Esophagus squamous epithelium (tissue), 5 donors: ENCODE measurements at regions of chr4 and their contacts with region 1.

Region 1: DNA sequence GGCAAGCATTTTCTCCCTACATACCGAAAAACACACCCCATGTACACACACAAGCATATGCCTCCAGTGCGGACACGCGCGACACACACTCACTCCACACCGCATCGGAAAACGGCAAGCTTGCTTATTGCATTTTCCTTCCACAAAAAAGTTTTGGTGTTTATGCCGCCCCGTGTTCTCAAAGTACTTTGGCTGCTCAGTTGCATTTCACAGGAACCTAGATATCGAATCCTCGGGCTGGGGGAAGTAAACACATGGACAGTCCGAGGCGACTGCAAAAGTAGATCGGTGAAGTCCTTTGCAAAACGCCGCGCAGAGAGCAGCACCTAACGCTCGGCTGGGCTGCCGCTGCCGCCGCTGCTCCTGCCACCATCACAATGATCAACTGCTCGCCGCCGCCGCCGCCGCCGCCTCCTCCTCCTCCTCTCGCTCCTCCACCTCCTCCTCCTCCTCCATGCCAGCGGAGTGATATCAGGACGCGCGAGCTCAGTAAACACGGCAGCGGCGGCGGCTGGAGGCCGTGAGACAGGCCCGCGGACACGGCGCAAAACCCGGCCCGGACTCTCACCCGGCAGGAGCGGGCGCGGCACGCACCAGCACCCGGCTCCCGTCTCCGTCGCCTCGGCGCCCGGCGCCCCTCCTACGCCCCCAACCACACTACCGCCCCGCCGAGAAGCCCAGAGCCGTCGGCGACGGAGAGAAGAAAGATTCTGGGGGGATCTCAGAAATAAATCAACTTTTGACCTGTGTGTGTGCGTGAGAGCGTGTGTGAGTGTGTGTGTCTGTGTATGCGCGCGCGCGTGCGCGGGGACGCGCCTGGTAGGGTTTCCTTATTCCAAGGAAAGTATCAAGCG is at the start of gene MAML3:
- DNase-seq: peak; percentile 31
- H3K4me3 ChIP-seq: peak within 1 kb of the TSS; percentile 58 to 85 (median 80)
- H3K27ac ChIP-seq: peak within 1 kb of the TSS; percentile 94 to 99 (median 96)
- H3K4me1 ChIP-seq: peaks cover 0 to 38% (median 7%) of the 10 kb centered on the region in 3 donors
- H3K27me3 ChIP-seq: no peaks in the 10 kb centered on the region
- CTCF ChIP-seq: peak in 3 of 6 experiments; percentile 2 to 25 (median 23)
- POLR2A ChIP-seq: peak in 3 of 4 donors; percentile 44 to 86 (median 83)
- total RNA-seq, gene MAML3: 6.9 to 14.2 (median 8.9) TPM

Region 2: DNA sequence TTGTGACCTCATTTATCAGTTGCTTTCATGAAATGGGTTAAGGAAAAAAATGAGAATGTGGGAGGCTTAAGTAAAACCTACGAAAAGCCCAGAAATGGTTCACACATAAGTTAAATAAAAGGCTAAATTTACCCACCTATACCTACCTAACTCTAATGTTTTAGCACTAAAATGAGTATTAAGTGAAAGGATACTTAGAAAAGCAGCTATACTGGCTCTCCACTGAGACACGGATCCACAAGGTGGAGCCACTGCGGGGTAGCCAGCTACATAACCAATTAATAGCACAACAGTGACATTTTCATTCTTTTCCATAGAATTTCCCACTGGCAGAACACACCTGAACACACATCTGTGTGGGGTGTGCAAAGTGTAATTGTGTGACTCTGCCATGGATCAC is 101.9 kb before region 1 on chr4:
- intact Hi-C with region 1: loop called (anchors 5 kb)
- DNase-seq: no peak
- H3K4me3 ChIP-seq: no peak overlapping the region
- H3K27ac ChIP-seq: no peak overlapping the region
- H3K4me1 ChIP-seq: peaks cover 0 to 34% (median 24%) of the 10 kb centered on the region in 3 donors
- H3K27me3 ChIP-seq: no peaks in the 10 kb centered on the region
- CTCF ChIP-seq: peak in 5 of 6 experiments; percentile 26 to 71 (median 50)
- POLR2A ChIP-seq: no peak

Region 3: GRCh38 chr4:140237606-140237986 is 83.7 kb after region 1 on chr4:
- intact Hi-C with region 1: loop called (anchors 5 kb)
- DNase-seq: peak; percentile 7
- H3K4me3 ChIP-seq: peak overlapping the region in 3 of 4 donors; percentile 14 to 52 (median 18)
- H3K27ac ChIP-seq: peak overlapping the region; percentile 83 to 91 (median 90)
- H3K4me1 ChIP-seq: peaks cover 20 to 72% (median 31%) of the 10 kb centered on the region in 3 donors
- H3K27me3 ChIP-seq: no peaks in the 10 kb centered on the region
- CTCF ChIP-seq: no peak
- POLR2A ChIP-seq: peak in 1 of 4 donors; percentile 9

Region 4: DNA sequence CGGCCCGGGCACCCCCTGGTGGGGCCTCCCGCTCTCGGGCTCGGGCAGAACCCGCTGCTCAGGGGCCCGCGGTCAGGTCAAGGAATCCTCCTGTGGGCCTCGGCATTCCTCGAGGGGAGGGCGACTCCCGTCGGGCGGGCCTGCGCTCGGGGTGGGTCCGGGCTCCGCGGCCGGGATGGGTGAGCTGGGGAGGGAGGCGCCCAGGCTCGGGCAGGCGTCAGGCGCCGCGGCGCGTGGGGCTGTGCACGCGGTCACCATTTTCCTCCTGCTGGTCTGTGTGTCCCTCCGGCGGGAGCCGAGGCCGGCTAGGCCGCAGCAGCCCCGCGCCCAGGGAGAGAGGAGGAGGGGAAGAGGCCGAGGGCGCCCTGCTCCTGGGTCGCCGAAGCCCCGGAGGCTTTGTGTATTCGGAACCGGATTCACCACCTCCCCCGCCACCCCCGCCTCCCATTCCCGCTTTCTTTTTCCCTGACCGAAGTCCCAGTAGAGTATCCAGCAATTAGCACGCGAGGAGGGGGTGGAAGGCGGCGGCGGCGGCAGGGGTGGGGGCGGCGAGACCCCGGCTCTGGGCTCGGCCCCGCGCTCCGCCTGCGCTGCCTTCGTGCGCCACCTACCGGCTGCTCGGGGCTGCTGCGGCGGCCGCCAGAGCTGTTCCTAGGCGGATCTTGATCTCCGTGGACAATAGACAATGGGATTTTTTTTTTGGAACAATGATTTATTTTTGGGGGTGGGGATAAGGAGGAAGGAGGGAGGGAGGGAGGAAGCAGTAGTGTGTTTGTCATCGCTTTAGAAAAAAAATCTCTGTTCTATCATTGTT is 99.0 kb after region 1 on chr4:
- intact Hi-C with region 1: loop called (anchors 5 kb)
- DNase-seq: no peak
- H3K4me3 ChIP-seq: peak overlapping the region; percentile 61 to 80 (median 76)
- H3K27ac ChIP-seq: peak overlapping the region; percentile 92 to 96 (median 94)
- H3K4me1 ChIP-seq: peaks cover 7 to 54% (median 9%) of the 10 kb centered on the region in 3 donors
- H3K27me3 ChIP-seq: no peaks in the 10 kb centered on the region
- CTCF ChIP-seq: peak; percentile 88 to 98 (median 92)
- POLR2A ChIP-seq: peak in 1 of 4 donors; percentile 27